Posterior vena cava (tissue), 2 donors: ENCODE measurements at regions of chr5 and their contacts with region 1.

Region 1: GRCh38 chr5:158899792-158900191 is 199.9 kb downstream of the EBF1 start:
- DNase-seq: no peak

Region 2: DNA sequence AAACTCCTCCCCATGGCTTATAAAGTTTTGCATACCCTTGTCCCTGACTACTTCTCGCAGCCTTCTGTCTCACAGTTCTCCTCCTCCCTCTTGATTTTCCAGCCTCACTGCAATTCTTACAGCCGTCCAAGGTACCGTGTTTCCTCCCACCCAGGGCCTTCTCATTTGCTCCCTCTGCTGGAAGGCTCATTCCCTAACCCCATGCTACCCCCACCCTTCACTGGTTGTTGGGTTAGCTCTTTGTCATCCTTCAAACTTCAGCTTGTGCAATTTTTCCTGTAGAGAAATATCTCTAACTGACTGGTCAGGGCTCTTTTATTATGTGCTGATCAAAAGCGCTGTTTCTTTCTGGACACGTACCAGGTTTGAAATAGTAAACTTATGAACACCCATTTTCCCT is 129.3 kb before region 1 on chr5:
- intact Hi-C with region 1: loop called in 1 of 2 experiments (anchors 10 kb)
- DNase-seq: no peak